Calu3 (cell line): ENCODE measurements at regions of chr7 and their contacts with region 1.

Region 1: GRCh38 chr7:48035301-48035966 is at the start of gene C7orf57:
- DNase-seq: peak; percentile 98
- H3K4me3 Mint-ChIP-seq: peak within 1 kb of the TSS; percentile 93
- H3K27ac Mint-ChIP-seq: peak within 1 kb of the TSS; percentile 80
- H3K4me1 Mint-ChIP-seq: peaks cover 14% of the 10 kb centered on the region
- H3K27me3 Mint-ChIP-seq: peaks cover 30% of the 10 kb centered on the region
- CTCF ChIP-seq: no peak
- total RNA-seq, gene C7orf57: 0.24 and 0.33 TPM in 2 replicates

Region 2: GRCh38 chr7:47924270-47924669 is 111.2 kb before region 1 on chr7:
- CTCF ChIA-PET with region 1: no interaction called
- intact Hi-C with region 1: no loop called
- DNase-seq: no peak
- H3K4me3 Mint-ChIP-seq: no peak overlapping the region
- H3K27ac Mint-ChIP-seq: no peak overlapping the region
- H3K4me1 Mint-ChIP-seq: no peaks in the 10 kb centered on the region
- H3K27me3 Mint-ChIP-seq: peaks cover 17% of the 10 kb centered on the region
- CTCF ChIP-seq: no peak

Region 3: DNA sequence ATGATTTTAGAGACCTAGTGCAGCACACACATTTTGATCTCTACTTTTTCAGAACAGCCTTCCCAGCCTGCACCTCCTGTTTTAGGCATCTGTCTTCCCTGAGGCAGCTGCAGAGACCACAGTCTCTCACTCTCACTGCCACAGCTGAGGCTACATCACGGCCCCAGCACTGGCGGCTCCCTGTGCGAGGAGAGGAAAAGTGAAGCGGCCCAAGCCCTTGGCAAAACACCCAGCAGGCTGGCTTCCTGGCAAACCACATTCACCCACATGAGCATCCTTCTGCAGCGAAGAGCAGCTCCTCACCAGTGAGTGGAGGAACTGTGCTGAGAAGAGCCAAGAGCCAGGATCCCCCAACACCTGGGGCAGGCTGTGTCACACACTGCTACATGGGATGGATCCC is 70.0 kb before region 1 on chr7:
- CTCF ChIA-PET with region 1: no interaction called
- intact Hi-C with region 1: no loop called
- DNase-seq: no peak
- H3K4me3 Mint-ChIP-seq: no peak overlapping the region
- H3K27ac Mint-ChIP-seq: no peak overlapping the region
- H3K4me1 Mint-ChIP-seq: peaks cover 20% of the 10 kb centered on the region
- H3K27me3 Mint-ChIP-seq: no peaks in the 10 kb centered on the region
- CTCF ChIP-seq: no peak

Region 4: GRCh38 chr7:48088559-48089045 is 53.2 kb after region 1 on chr7:
- CTCF ChIA-PET with region 1: interaction called, 4 read pairs
- intact Hi-C with region 1: loop called (anchors 2 kb)
- DNase-seq: peak; percentile 98
- H3K4me3 Mint-ChIP-seq: peak overlapping the region; percentile 82
- H3K27ac Mint-ChIP-seq: peak overlapping the region; percentile 82
- H3K4me1 Mint-ChIP-seq: peaks cover 79% of the 10 kb centered on the region
- H3K27me3 Mint-ChIP-seq: no peaks in the 10 kb centered on the region
- CTCF ChIP-seq: no peak

Region 5: DNA sequence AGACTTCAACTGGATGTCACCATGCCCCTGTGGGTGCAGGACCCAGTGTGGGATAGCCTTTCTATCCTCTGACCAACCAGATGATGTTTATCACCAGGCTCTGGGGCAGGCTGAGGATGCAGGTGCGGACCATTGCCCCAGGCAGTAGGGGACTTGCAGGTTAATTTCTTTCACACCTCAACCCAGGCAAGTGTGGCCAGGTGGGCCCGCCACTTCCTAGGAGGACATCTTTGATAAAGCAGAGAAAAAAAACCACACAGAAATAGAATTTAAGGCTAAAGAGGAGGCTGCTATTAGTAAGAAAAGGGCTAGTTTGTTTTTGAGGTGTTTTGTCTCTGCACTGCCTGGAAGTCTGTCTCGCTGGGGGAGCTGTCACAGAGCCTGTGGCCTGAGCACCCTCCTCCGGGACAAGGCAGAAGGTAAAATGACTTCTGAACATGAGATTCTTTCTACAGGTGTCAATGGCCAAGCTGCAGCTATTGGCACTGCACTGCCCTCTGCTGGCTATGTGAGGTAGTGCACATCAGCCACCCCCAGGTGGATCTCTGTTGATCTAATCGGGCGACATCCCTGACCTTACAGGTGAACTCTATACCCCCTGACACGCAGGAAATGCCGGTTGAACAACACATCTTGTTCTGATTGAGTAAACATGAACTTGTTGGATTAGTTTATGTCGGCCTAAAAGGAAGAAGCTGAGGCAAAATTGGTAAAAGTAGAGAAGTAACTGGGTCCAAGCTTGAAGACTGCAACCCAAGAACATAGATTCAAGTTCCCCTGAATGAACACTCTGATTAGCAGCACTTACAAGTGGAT is 74.6 kb after region 1 on chr7:
- CTCF ChIA-PET with region 1: no interaction called
- intact Hi-C with region 1: loop called (anchors 2 kb)
- DNase-seq: peak; percentile 93
- H3K4me3 Mint-ChIP-seq: no peak overlapping the region
- H3K27ac Mint-ChIP-seq: peak overlapping the region; percentile 45
- H3K4me1 Mint-ChIP-seq: peaks cover 12% of the 10 kb centered on the region
- H3K27me3 Mint-ChIP-seq: no peaks in the 10 kb centered on the region
- CTCF ChIP-seq: peak; percentile 100

Region 6: DNA sequence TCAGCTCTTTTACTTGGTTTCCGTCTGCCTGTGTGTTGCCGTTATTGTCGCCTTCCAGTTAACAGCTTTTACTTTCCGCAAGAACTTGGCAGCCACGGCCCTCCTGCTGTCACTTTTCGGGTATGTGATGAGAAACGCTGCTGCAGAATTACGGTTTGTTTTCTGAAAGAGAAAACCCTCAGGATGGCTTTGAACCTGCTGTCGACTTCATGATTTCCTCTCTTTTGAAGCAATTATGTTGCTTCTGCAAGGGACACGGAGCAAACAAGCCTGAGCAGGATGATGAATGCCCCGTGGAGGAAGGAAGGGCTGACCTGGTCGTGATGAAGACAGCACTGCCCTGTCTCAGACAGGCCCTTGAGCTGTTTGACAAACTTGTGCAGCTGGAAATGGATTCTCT is 475.6 kb after region 1 on chr7:
- CTCF ChIA-PET with region 1: no interaction called
- intact Hi-C with region 1: no loop called
- DNase-seq: no peak
- H3K4me3 Mint-ChIP-seq: no peak overlapping the region
- H3K27ac Mint-ChIP-seq: no peak overlapping the region
- H3K4me1 Mint-ChIP-seq: no peaks in the 10 kb centered on the region
- H3K27me3 Mint-ChIP-seq: peaks cover 13% of the 10 kb centered on the region
- CTCF ChIP-seq: no peak